Activated naive CD4-positive, alpha-beta T cell treated with anti-CD3 and anti-CD28 coated beads for 36 hours (primary cell): ENCODE measurements at regions of chr5 and their contacts with region 1.

Region 1: GRCh38 chr5:143403593-143404415 is at the start of gene NR3C1:
- DNase-seq: peak; percentile 84
- H3K4me3 Mint-ChIP-seq: peak within 1 kb of the TSS; percentile 82
- H3K27ac Mint-ChIP-seq: peak within 1 kb of the TSS; percentile 99
- H3K4me1 Mint-ChIP-seq: peaks cover 38% of the 10 kb centered on the region
- H3K27me3 Mint-ChIP-seq: no peaks in the 10 kb centered on the region
- total RNA-seq, gene NR3C1: 41.8 to 42.9 TPM

Region 2: DNA sequence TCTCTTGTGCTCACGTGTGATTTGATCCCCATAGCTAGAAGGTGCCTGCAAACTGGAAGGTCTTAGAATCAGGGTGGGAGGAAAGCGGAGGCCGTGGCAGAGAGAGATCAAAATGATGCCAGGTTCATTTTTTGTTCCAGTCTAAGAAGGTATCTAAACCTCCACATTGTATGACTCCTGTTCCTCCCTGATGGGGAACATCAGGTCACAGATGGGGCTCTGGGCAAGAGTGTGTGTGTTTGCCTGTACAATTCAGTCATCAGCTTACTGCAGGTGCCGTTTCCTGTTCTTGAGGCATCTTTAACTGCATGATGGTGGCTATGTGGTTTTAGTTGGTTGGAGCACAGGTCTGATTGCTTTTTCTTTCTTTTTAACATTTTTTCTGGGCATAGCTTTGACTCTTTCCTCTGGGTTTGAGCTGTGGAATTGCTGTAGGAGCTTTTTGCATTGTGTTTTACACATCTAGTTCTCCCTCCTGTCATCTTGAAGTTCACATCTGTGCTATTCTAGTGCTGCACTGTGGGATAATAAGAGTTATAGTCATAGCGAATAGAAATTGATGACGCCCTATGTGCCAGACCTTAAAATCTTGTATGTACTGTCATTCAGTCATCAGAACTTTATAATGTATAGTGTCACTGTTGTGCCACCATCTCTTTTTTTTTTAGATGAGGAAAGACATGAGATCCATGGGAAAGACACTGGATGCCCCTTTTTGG is 602.9 kb before region 1 on chr5:
- CTCF ChIA-PET with region 1: no interaction called
- intact Hi-C with region 1: loop called (anchors 10 kb)
- DNase-seq: peak; percentile 77
- H3K4me3 Mint-ChIP-seq: peak overlapping the region; percentile 64
- H3K27ac Mint-ChIP-seq: peak overlapping the region; percentile 90
- H3K4me1 Mint-ChIP-seq: peaks cover 61% of the 10 kb centered on the region
- H3K27me3 Mint-ChIP-seq: no peaks in the 10 kb centered on the region

Region 3: GRCh38 chr5:143008809-143009521 is 394.8 kb before region 1 on chr5:
- CTCF ChIA-PET with region 1: interaction called, 14 read pairs
- intact Hi-C with region 1: loop called (anchors 1 kb)
- DNase-seq: peak; percentile 95
- H3K4me3 Mint-ChIP-seq: no peak overlapping the region
- H3K27ac Mint-ChIP-seq: peak overlapping the region; percentile 85
- H3K4me1 Mint-ChIP-seq: peaks cover 56% of the 10 kb centered on the region
- H3K27me3 Mint-ChIP-seq: no peaks in the 10 kb centered on the region

Region 4: GRCh38 chr5:143119291-143119769 is 284.5 kb before region 1 on chr5:
- CTCF ChIA-PET with region 1: no interaction called
- intact Hi-C with region 1: loop called (anchors 5 kb)
- DNase-seq: no peak
- H3K4me3 Mint-ChIP-seq: no peak overlapping the region
- H3K27ac Mint-ChIP-seq: peak overlapping the region; percentile 20
- H3K4me1 Mint-ChIP-seq: peaks cover 15% of the 10 kb centered on the region
- H3K27me3 Mint-ChIP-seq: no peaks in the 10 kb centered on the region

Region 5: DNA sequence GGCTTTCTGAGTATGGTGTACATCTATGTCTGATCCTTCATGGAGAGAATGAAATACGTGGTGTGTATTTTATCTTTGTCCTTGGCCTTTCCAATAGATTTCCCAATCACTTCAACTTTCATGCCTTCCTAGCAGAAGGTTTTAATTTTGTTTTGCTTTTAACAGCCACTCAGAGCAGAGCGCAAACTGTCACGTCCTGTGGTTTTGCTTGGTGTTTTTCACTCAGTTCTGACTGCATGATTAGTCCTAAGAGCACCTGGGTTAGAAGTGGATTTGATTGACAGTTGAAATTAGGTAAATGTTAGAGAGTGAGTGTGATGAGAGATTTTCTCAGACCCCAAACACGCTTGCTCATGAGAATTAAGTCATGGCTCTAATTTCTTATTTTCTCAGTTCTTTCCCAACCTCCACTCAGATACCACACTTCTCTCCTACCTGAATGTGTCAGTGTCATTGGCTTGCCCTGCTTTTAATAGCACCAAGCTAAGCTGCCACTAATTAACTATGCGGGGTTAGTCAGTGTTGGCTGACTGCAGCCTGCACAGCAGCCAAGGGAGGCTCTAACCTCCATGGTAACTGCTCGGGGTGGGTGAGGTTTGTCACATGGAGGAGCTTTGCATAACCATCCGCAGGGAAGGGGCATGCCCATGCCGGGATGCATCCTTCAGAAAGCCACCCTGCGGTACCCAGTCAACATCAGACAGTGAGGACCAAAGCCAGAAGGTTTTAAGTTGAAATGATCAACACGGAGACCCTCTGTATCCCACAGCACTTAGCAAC is 173.7 kb before region 1 on chr5:
- CTCF ChIA-PET with region 1: interaction called, 7 read pairs
- intact Hi-C with region 1: loop called (anchors 1 kb)
- DNase-seq: peak; percentile 74
- H3K4me3 Mint-ChIP-seq: peak overlapping the region; percentile 46
- H3K27ac Mint-ChIP-seq: peak overlapping the region; percentile 69
- H3K4me1 Mint-ChIP-seq: peaks cover 24% of the 10 kb centered on the region
- H3K27me3 Mint-ChIP-seq: no peaks in the 10 kb centered on the region

Region 6: GRCh38 chr5:143435210-143435657 is 31.4 kb after region 1 on chr5:
- CTCF ChIA-PET with region 1: interaction called, 4 read pairs
- intact Hi-C with region 1: loop called (anchors 1 kb)
- DNase-seq: peak; percentile 61
- H3K4me3 Mint-ChIP-seq: peak overlapping the region; percentile 83
- H3K27ac Mint-ChIP-seq: peak overlapping the region; percentile 97
- H3K4me1 Mint-ChIP-seq: peaks cover 68% of the 10 kb centered on the region
- H3K27me3 Mint-ChIP-seq: no peaks in the 10 kb centered on the region

Region 7: GRCh38 chr5:143968011-143968878 is 564.4 kb after region 1 on chr5:
- CTCF ChIA-PET with region 1: no interaction called
- intact Hi-C with region 1: loop called (anchors 2 kb)
- DNase-seq: peak; percentile 6
- H3K4me3 Mint-ChIP-seq: no peak overlapping the region
- H3K27ac Mint-ChIP-seq: no peak overlapping the region
- H3K4me1 Mint-ChIP-seq: no peaks in the 10 kb centered on the region
- H3K27me3 Mint-ChIP-seq: peaks cover 16% of the 10 kb centered on the region

Region 8: GRCh38 chr5:144040615-144041305 is 637.0 kb after region 1 on chr5:
- CTCF ChIA-PET with region 1: no interaction called
- intact Hi-C with region 1: no loop called
- DNase-seq: no peak
- H3K4me3 Mint-ChIP-seq: no peak overlapping the region
- H3K27ac Mint-ChIP-seq: no peak overlapping the region
- H3K4me1 Mint-ChIP-seq: no peaks in the 10 kb centered on the region
- H3K27me3 Mint-ChIP-seq: peaks cover 3% of the 10 kb centered on the region